ENCODE measurements at regions of chr11 and their contacts with region 1.

Region 1: DNA sequence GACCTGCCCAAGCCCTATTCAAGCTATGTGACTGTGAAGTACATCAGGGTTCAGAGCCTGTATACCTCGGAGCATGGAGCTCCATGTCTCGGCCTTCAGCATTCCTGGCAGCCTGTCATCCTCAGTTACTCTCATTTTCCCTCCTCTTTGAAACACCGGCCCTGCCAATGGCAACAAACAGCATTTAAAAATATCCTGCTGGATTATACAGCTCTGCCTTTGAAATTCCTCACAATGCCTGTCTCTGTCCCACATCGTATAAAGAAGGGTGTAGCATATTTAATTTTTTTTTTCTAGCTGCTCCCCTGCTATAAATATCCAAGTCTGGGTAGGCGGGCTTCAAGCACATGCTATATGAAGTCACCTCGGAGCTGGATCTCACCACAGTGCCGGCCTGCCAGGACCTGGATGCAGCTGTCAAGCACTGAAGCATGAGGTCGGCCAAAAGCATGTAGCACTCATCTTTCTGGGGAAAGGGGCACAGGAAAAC is 11.8 kb downstream of the ABTB2 start:
- DNase-seq: peak; percentile 53 to 81
- ATAC-seq: peak; percentile 85 to 89 (median 86)
- H3K4me3 ChIP-seq: peak overlapping the region; percentile 35
- H3K27ac ChIP-seq: peak overlapping the region; percentile 83
- H3K4me1 ChIP-seq: peaks cover 88% of the 10 kb centered on the region
- H3K27me3 ChIP-seq: no peaks in the 10 kb centered on the region
- CTCF ChIP-seq: no peak

Region 2: DNA sequence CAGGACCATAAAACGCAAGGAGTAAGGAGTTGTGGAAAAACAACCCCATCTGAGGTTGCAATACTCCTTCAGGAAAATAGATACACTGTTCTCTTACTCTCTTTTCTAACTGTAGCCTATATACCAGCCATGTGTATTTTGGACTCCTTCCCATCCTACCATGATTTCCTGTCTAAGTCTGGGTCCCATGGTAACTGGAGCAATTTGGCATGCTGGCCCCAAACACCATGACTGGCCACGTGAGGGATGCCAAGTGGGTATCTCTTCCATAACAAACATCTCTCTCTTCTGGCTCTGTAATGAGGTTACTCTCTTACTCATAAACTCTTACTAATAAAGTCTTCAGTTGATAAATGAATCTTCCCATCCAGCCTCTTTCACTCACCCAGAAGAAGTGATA is 14.7 kb before region 1 on chr11:
- intact Hi-C with region 1: loop called in 1 of 2 experiments (anchors 2 kb)
- DNase-seq: no peak
- ATAC-seq: peak in 1 of 4 donors; percentile 41
- H3K4me3 ChIP-seq: no peak overlapping the region
- H3K27ac ChIP-seq: no peak overlapping the region
- H3K4me1 ChIP-seq: peaks cover 53% of the 10 kb centered on the region
- H3K27me3 ChIP-seq: no peaks in the 10 kb centered on the region
- CTCF ChIP-seq: no peak